ENCODE measurements at regions of chr14 and their contacts with region 1.

Region 1: DNA sequence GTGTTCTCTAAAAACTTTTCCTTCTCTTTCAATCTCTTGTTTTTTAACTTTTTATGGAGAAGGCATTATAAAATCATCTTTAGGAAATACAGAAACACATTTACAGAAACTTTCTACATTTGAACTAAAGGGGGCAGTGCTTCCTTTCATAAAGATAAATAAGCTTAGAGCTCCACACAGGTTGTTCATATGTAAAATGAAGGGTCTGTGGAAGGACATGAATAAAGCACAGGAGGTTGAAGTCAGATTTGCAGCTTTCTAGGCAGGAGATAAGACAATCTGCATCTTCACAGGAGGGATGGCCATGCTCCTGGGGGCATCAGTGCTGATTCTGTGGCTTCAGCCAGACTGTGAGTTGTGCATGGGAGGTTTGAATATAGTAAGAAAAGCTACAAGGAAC is 426.0 kb downstream of the DAD1 start:
- DNase-seq: no peak
- H3K4me3 ChIP-seq: no peak overlapping the region
- H3K27ac ChIP-seq: no peak overlapping the region
- H3K4me1 ChIP-seq: peaks cover 30% of the 10 kb centered on the region
- H3K27me3 ChIP-seq: no peaks in the 10 kb centered on the region
- CTCF ChIP-seq: peak; percentile 29 to 35

Region 2: DNA sequence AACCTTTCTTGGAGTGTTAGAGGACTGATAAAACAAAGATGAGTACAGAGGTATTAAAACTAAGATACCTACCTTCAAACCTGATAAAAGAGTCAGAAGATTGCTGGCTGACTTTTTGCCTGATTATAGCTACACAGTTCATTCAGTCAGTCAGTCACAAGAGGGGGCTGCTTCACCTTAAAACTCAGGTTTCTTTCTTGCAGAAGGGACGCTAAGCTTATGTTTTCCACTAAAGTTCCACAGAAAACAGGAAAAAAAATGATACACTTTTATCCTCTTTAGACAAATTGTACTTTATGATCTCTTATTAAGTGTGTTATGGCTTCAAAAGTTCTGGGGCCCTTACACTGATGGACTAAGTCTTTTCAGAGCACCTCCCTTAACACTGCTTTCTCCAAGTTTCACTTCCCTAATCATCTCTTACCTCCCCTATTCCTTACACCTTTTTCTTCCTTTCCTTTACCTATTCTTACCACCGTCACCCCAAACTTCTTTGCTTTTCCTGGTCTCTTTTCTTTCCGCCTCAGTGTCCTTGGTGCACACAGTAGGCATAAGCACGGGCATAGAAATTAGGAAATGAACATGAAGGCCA is 40.7 kb before region 1 on chr14:
- CTCF ChIA-PET with region 1: no interaction called
- dilution Hi-C with region 1: no loop called
- in situ Hi-C with region 1: no loop called
- intact Hi-C with region 1: loop called (anchors 5 kb)
- DNase-seq: peak; percentile 24
- H3K4me3 ChIP-seq: no peak overlapping the region
- H3K27ac ChIP-seq: no peak overlapping the region
- H3K4me1 ChIP-seq: peaks cover 6% of the 10 kb centered on the region
- H3K27me3 ChIP-seq: peaks cover 2% of the 10 kb centered on the region
- CTCF ChIP-seq: peak; percentile 29 to 53

Region 3: DNA sequence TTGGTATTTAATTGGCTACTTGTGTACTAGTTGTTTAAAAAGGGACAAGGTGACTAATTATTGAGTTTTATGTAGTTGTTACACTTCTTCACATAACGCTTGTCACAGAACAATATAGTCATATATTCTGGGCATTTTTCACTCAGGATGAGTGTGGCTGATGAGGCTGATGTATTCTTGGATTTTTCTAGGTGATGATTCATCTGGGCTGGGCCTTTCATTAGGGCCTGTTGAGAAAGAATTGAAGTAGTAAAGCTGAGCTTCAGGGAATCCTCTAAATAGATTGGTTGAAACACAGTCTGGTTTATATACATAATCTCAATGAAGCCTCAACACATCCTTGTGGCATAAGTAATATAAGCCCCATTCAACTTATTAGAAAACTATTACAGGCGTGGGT is 19.7 kb before region 1 on chr14:
- CTCF ChIA-PET with region 1: no interaction called
- dilution Hi-C with region 1: no loop called
- in situ Hi-C with region 1: no loop called
- intact Hi-C with region 1: loop called (anchors 2 kb)
- DNase-seq: peak; percentile 80
- H3K4me3 ChIP-seq: no peak overlapping the region
- H3K27ac ChIP-seq: no peak overlapping the region
- H3K4me1 ChIP-seq: peaks cover 8% of the 10 kb centered on the region
- H3K27me3 ChIP-seq: no peaks in the 10 kb centered on the region
- CTCF ChIP-seq: no peak

Region 4: GRCh38 chr14:22200977-22201605 is 38.0 kb after region 1 on chr14:
- CTCF ChIA-PET with region 1: interaction called, 10 read pairs
- dilution Hi-C with region 1: no loop called
- in situ Hi-C with region 1: no loop called
- intact Hi-C with region 1: loop called (anchors 5 kb)
- DNase-seq: peak; percentile 62
- H3K4me3 ChIP-seq: no peak overlapping the region
- H3K27ac ChIP-seq: no peak overlapping the region
- H3K4me1 ChIP-seq: no peaks in the 10 kb centered on the region
- H3K27me3 ChIP-seq: no peaks in the 10 kb centered on the region
- CTCF ChIP-seq: peak; percentile 79 to 81

Measured in mammary epithelial cell (primary cell).